T-cell (primary cell): ENCODE measurements at regions of chr17 and their contacts with region 1.

Region 1: GRCh38 chr17:39769974-39770587 is 32.3 kb downstream of the GRB7 start:
- DNase-seq: peak in 33 of 35 experiments; percentile 21 to 83 (median 48)
- ATAC-seq: peak; percentile 80 to 93 (median 88)
- H3K4me3 ChIP-seq: peak overlapping the region in 1 of 2 donors; percentile 6
- H3K4me3 Mint-ChIP-seq: peak overlapping the region; percentile 38 to 79 (median 47)
- H3K27ac ChIP-seq: peak overlapping the region; percentile 91
- H3K27ac Mint-ChIP-seq: peak overlapping the region; percentile 98 to 99
- H3K4me1 ChIP-seq: peaks cover 67 to 84% of the 10 kb centered on the region in 2 experiments
- H3K4me1 Mint-ChIP-seq: peaks cover 100% of the 10 kb centered on the region in 3 donors
- H3K27me3 ChIP-seq: no peaks in the 10 kb centered on the region
- H3K27me3 Mint-ChIP-seq: no peaks in the 10 kb centered on the region

Region 2: DNA sequence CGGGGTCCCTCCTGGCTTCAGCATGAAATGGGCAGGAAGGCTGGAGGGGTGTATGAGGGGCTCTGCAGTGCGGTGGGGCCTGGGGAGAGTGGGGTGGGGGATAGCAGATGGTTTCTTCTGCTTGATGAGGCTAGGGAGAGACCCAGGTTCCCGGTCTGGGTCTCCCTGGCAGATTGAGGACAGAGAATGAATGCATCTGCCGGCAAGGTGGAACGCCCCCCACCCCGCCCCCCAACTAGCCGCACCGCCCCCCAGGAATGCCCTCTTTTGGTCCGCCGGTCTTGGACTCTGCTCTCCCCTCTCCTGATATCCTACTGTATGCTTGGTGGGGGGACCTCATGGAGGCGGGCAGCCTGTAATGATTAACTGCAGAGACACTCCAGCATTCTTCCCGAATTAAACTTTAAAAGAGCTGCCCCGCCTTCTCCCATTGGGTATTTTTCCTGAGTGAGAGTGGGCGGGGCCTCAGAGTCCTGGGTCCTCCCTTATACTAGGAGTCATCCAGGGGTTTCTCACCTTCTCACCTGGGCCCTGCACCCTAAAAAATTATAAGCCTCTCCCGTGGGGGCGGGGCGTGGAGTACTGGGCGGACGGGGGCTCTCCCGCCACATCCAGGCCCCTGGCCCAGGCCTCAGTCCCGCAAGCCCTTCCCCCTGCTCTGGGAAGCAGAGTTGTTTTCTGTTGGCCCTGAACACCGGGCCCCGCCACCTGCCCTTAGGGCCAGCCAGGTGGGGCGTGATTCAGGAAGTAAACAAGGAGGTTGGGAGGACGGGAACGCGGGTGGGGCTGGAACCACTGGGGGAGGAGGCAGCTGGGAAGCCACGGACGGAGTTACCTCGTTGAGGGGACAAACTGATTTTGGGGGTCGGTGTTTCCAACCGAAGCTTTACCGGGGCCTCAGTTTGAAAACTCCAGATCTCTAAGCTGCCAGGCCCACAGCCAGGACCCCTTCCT is 30.9 kb before region 1 on chr17:
- CTCF ChIA-PET with region 1: no interaction called
- POLR2A ChIA-PET with region 1: no interaction called
- DNase-seq: no peak
- ATAC-seq: peak in 1 of 4 experiments; percentile 44
- H3K4me3 ChIP-seq: peak overlapping the region in 1 of 2 donors; percentile 12
- H3K4me3 Mint-ChIP-seq: peak overlapping the region in 2 of 3 donors; percentile 21 to 82
- H3K27ac ChIP-seq: no peak overlapping the region
- H3K27ac Mint-ChIP-seq: no peak overlapping the region
- H3K4me1 ChIP-seq: peaks cover 4 to 26% of the 10 kb centered on the region in 2 experiments
- H3K4me1 Mint-ChIP-seq: peaks cover 10 to 19% (median 12%) of the 10 kb centered on the region in 3 donors
- H3K27me3 ChIP-seq: peaks cover 0 to 70% of the 10 kb centered on the region in 2 experiments
- H3K27me3 Mint-ChIP-seq: peaks cover 8 to 31% of the 10 kb centered on the region in 2 donors

Region 3: DNA sequence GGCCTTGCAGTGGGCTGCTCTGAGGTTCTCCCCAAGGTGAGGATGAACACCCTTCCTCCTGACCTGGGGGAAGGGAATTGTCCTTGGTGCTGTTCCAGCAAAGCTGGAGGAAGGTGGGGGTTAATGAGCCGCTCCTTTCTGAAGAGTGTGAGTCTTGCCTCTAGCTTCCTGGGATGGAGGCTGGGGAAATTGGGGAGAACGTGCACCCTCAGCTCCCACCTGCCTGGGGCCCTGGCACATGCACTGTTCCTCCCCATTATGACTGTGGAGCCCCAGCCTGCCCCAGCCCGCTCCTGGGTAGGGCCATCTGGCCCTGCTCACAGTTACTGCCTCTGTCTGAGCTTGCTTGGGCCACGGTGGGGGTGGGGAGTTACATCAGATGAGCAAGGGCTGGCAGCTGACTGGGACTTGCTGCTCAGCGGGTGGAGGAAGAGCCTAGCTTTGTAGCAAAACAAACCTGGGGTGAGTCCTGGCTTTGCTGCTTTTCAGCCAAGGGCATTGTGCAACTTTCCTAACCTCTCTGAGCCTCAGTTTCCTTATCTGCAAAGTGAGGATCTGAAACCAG is 720.3 kb after region 1 on chr17:
- CTCF ChIA-PET with region 1: no interaction called
- POLR2A ChIA-PET with region 1: interaction called in 1 of 2 experiments, 10 read pairs
- DNase-seq: no peak
- ATAC-seq: peak in 2 of 4 experiments; percentile 13 to 36
- H3K4me3 ChIP-seq: peak overlapping the region in 1 of 2 donors; percentile 30
- H3K4me3 Mint-ChIP-seq: peak overlapping the region in 1 of 3 donors; percentile 65
- H3K27ac ChIP-seq: no peak overlapping the region
- H3K27ac Mint-ChIP-seq: peak overlapping the region in 1 of 2 donors; percentile 67
- H3K4me1 ChIP-seq: peaks cover 24 to 53% of the 10 kb centered on the region in 2 experiments
- H3K4me1 Mint-ChIP-seq: peaks cover 51 to 62% (median 55%) of the 10 kb centered on the region in 3 donors
- H3K27me3 ChIP-seq: peaks cover 0 to 2% of the 10 kb centered on the region in 2 experiments
- H3K27me3 Mint-ChIP-seq: no peaks in the 10 kb centered on the region